Spleen (tissue), 13 donors: ENCODE measurements at regions of chr9 and their contacts with region 1.

Region 1: DNA sequence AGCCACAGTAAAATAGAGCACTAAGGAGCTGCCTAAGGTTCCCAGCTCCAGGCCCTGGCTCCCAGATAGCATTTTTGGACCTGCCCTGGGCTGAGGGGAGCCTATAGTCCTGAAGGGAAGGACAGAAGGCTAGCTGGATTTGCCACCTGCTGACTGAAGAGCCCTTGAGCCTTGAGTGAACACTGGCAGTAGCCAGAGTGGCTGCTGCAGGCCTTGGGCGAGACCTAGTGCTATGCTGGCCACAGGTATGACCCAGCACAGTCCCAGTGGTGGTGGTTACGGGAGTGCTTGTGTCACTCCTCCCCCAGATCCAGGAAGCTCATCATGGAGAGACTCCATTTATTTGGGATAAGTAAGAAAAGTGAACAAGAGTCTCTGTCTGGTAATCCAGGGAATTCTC is 10.3 kb upstream of the STX17 start:
- DNase-seq: no peak
- H3K4me3 ChIP-seq: no peak overlapping the region
- H3K27ac ChIP-seq: no peak overlapping the region
- H3K4me1 ChIP-seq: no peaks in the 10 kb centered on the region
- H3K27me3 ChIP-seq: no peaks in the 10 kb centered on the region
- CTCF ChIP-seq: no peak
- POLR2A ChIP-seq: no peak

Region 2: GRCh38 chr9:99833735-99834134 is 62.4 kb before region 1 on chr9:
- intact Hi-C with region 1: loop called (anchors 10 kb)
- DNase-seq: no peak
- H3K4me3 ChIP-seq: no peak overlapping the region
- H3K27ac ChIP-seq: no peak overlapping the region
- H3K4me1 ChIP-seq: peaks cover 0 to 2% (median 0%) of the 10 kb centered on the region in 6 donors
- H3K27me3 ChIP-seq: peaks cover 0 to 29% (median 8%) of the 10 kb centered on the region in 7 donors
- CTCF ChIP-seq: no peak
- POLR2A ChIP-seq: no peak

Region 3: DNA sequence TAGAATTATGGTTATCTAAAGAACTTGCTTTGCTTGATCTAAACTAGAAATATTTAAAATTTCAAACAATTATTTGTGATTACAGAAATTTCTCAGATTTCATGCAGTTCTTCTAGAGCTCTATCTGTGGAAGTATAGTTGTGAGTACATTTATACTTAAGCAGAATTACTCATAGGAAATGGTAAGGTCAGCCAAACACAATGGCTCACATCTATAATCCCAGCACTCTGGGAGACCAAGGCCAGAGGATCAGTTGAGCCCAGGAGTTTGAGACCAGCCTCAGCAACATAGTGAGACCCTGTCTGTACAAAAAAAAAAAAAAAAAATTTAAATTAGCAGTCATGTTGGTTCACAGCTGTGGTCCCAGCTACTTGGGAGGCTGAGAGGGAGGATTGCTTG is 274.0 kb after region 1 on chr9:
- intact Hi-C with region 1: no loop called
- DNase-seq: no peak
- H3K4me3 ChIP-seq: no peak overlapping the region
- H3K27ac ChIP-seq: no peak overlapping the region
- H3K4me1 ChIP-seq: no peaks in the 10 kb centered on the region
- H3K27me3 ChIP-seq: no peaks in the 10 kb centered on the region
- CTCF ChIP-seq: no peak
- POLR2A ChIP-seq: no peak